Left cardiac atrium (tissue), 4 donors: ENCODE measurements at regions of chr11 and their contacts with region 1.

Region 1: DNA sequence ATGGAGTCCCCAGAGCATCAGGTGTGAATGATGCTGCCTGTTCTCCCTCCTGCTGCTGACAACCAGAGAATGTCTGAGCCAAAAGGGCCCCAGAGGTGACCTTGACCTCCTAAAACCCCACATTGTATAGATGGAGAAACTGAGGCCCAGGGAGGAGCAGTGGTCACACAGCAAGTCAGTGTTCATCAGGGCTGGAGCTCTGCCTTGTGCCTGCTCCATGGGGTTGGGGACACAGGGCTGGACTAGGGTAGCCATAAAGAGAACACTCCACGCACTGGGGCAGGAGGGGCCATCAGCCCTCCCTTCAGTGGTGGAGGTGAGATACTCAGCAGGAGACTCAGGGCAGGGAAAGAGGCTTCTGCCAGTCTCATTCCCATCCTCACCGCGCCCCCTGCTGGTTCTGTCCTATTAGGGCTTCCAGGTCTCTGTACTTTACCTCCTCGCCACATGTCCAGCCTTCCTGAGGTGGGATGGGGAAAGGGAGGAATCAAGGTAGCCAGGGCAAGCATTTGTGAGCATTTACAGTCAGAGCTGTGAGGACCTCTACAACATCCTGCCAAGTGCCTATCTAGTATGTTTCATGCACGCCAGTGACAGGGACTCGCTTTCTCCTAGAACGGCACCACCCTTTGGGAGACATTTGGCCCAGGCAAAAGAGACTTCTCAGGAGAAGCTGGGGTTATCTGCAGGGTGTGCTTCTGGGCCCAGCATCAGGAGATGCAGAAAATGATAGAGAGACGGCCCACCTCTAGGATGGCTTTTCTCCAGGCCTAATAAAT is 43.2 kb downstream of the NEU3 start:
- DNase-seq: peak; percentile 80
- ATAC-seq: peak; percentile 76 to 80

Region 2: GRCh38 chr11:74929431-74930363 is 102.3 kb before region 1 on chr11:
- intact Hi-C with region 1: loop called (anchors 1 to 5 kb)
- DNase-seq: peak; percentile 63
- ATAC-seq: peak; percentile 84 to 87

Region 3: GRCh38 chr11:75248690-75249268 is 216.8 kb after region 1 on chr11:
- intact Hi-C with region 1: loop called in 1 of 2 experiments (anchors 5 kb)
- DNase-seq: peak; percentile 90
- ATAC-seq: peak; percentile 92 to 94

Region 4: GRCh38 chr11:75428281-75428724 is 396.3 kb after region 1 on chr11:
- intact Hi-C with region 1: no loop called
- DNase-seq: peak; percentile 94
- ATAC-seq: peak; percentile 81 to 90